Dorsolateral prefrontal cortex (tissue), 120 donors: ENCODE measurements at regions of chr14 and their contacts with region 1.

Region 1: DNA sequence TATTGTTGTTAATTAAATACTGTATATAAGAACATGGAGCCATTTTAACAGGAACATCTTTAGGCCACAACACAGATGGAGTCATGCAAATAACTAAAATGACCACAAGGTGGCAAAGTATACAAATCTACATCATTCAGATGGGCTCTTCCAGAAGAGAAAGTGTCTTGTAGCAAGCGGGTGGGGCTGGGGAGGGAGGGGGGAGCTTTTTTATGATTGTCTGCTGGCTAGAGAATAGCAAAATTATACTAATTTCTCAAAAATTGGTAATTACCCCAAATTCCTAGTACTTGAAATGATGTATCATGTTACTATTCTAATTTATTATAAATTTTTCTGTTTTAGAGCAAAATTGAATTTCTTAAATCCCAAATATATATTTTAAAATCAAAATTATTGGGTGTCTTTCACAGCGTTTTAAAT is 378.7 kb downstream of the PRKD1 start:
- DNase-seq: no peak
- H3K4me3 ChIP-seq: no peak overlapping the region
- H3K27ac ChIP-seq: no peak overlapping the region
- H3K27me3 ChIP-seq: no peaks in the 10 kb centered on the region
- CTCF ChIP-seq: peak; percentile 47 to 87 (median 75)

Region 2: DNA sequence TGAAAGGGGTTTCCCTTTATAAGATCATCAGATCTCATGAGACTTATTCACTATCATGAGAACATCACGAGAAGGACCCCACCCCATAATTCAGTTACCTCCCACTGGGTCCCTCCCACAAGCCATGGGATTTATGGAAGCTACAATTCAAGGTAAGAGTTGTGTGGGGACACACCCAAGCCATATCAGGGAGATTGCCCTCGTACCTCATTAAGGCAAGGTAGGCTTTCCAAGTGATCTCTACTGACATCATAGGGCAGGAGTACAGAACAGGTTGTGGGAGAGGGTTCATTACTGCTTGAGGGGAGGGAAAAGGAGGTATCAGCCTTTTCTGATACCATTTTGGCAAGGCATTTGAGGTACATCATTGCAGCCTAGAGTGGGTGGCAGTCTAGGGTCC is 145.9 kb before region 1 on chr14:
- intact Hi-C with region 1: no loop called
- DNase-seq: no peak
- H3K4me3 ChIP-seq: no peak overlapping the region
- H3K27ac ChIP-seq: no peak overlapping the region
- H3K27me3 ChIP-seq: no peaks in the 10 kb centered on the region
- CTCF ChIP-seq: no peak

Region 3: DNA sequence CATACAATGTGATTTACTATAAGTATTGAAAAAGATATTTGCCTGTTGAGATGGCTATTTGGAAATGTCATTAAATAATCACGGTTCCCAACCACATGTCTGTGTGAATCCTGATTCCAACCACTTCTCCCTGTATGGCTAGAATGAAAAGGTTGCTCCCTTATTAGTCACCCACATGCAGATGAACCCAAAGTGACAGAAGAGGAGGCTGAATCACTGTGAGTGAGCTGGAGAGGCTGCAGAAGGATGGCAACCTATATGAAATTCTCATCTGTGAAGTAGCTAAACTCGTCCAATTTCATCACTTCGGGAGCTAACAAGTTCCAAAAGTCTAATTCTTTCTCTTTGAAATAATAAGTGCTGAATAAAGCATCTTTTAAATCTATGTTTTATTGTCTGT is 78.2 kb after region 1 on chr14:
- intact Hi-C with region 1: no loop called
- DNase-seq: no peak
- H3K4me3 ChIP-seq: no peak overlapping the region
- H3K27ac ChIP-seq: no peak overlapping the region
- H3K27me3 ChIP-seq: no peaks in the 10 kb centered on the region
- CTCF ChIP-seq: no peak

Region 4: DNA sequence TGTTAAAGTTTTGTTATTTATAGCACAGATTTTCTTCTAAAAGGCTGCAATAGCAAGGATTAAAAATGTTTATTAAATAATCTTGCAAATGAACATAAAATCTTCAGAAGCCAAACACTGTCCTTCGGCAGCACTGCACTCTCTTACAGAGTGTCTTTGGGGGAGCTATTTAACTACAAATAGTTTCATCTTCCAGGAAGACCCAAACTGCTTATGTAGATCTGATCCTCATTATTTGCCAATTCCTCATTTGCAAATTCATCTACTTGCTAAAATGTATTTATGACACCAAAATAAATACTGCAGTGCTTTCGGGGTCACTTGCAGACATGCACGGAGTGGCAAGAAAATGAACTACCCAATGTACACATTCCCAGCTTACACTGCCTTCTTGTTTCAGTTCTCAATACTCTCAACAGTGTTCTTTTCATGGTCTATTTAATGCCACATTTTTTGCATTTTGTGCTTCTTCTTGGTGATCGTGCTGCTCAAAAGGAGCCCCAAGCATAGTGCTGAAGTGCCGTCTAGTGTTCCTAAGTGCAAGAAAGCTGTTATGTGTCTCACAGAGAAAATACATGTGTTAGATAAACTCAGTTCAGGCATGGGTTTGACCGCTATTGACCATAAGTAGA is 250.6 kb after region 1 on chr14:
- intact Hi-C with region 1: loop called in 1 of 2 experiments (anchors 5 kb)
- DNase-seq: peak in 1 of 10 donors; percentile 28
- H3K4me3 ChIP-seq: peak overlapping the region in 45 of 59 donors; percentile 1 to 57 (median 31)
- H3K27ac ChIP-seq: peak overlapping the region in 15 of 59 donors; percentile 4 to 52 (median 21)
- H3K27me3 ChIP-seq: no peaks in the 10 kb centered on the region
- CTCF ChIP-seq: peak in 36 of 56 donors; percentile 6 to 60 (median 30)

Region 5: GRCh38 chr14:29927376-29928116 is 378.6 kb after region 1 on chr14 and contains the start of gene PRKD1:
- intact Hi-C with region 1: loop called in 1 of 2 experiments (anchors 10 kb)
- DNase-seq: peak in 9 of 10 donors; percentile 18 to 78 (median 57)
- H3K4me3 ChIP-seq: peak within 1 kb of the TSS; percentile 58 to 88 (median 76)
- H3K27ac ChIP-seq: peak within 1 kb of the TSS in 58 of 59 donors; percentile 39 to 92 (median 81)
- H3K27me3 ChIP-seq: no peaks in the 10 kb centered on the region
- CTCF ChIP-seq: peak in 48 of 56 donors; percentile 8 to 67 (median 43)
- total RNA-seq, gene PRKD1: 11.2 to 35.0 (median 22.1) TPM

Region 6: GRCh38 chr14:30005114-30005808 is 456.3 kb after region 1 on chr14:
- intact Hi-C with region 1: loop called (anchors 5 kb)
- DNase-seq: no peak
- H3K4me3 ChIP-seq: peak overlapping the region in 4 of 59 donors; percentile 2 to 19 (median 8)
- H3K27ac ChIP-seq: no peak overlapping the region
- H3K27me3 ChIP-seq: no peaks in the 10 kb centered on the region
- CTCF ChIP-seq: peak; percentile 21 to 88 (median 74)

Region 7: GRCh38 chr14:30214461-30215090 is 665.6 kb after region 1 on chr14:
- intact Hi-C with region 1: loop called in 1 of 2 experiments (anchors 2 kb)
- DNase-seq: no peak
- H3K4me3 ChIP-seq: peak overlapping the region in 4 of 59 donors; percentile 2 to 29 (median 14)
- H3K27ac ChIP-seq: peak overlapping the region in 6 of 59 donors; percentile 11 to 35 (median 26)
- H3K27me3 ChIP-seq: no peaks in the 10 kb centered on the region
- CTCF ChIP-seq: peak; percentile 53 to 83 (median 70)